Activated naive CD4-positive, alpha-beta T cell treated with anti-CD3 and anti-CD28 coated beads for 36 hours (primary cell): ENCODE measurements at regions of chr3 and their contacts with region 1.

Region 1: GRCh38 chr3:5026331-5027218 is 47.3 kb downstream of the BHLHE40 start:
- DNase-seq: peak; percentile 86
- H3K4me3 Mint-ChIP-seq: peak overlapping the region; percentile 74
- H3K27ac Mint-ChIP-seq: peak overlapping the region; percentile 80
- H3K4me1 Mint-ChIP-seq: peaks cover 38% of the 10 kb centered on the region
- H3K27me3 Mint-ChIP-seq: no peaks in the 10 kb centered on the region

Region 2: DNA sequence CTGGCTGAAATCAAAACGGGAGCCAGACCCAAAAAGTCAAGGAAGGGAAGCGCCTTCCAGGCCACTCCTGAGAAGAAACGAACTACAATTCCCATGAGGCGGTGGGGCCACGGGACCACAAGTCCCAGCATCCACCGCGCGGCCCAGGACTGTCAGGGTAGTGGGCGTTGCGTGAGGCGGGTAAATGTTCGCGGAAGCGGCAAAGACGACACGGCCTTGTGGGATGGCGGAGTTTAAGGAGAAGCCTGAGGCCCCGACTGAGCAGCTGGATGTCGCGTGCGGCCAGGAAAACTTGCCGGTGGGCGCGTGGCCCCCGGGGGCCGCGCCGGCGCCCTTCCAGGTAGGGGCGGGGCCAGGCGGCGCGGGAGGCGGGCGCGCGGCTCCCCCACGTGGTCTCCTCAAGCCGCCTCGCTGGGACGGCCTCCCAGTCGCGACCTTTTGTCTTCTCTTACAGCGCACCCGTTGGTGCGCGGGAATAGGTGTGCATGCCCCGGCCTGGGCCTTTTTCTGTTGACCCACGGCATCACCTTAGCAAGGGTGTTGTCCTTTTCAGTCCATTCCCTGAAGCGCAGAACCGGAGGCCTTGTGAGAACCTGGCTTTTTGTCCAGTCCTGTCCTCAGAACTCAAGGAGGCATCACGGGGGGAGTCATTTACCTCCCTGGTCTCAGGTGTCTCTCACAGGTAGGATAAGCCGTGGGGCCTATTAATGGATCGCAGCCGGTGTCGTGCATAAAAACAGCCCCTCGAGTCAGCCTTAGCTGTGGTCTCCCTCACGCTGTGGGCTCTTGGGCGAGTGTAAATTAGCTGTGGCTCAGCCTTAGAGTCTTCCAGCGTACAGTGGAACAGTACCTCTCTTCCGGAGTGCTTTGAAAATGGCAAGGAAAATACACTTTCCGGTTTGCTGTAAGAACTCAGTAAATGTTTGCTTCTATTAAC is 723.1 kb before region 1 on chr3 and contains the start of gene SETMAR:
- CTCF ChIA-PET with region 1: no interaction called
- intact Hi-C with region 1: loop called (anchors 5 kb)
- DNase-seq: peak; percentile 92
- H3K4me3 Mint-ChIP-seq: peak within 1 kb of the TSS; percentile 89
- H3K27ac Mint-ChIP-seq: peak within 1 kb of the TSS; percentile 98
- H3K4me1 Mint-ChIP-seq: peaks cover 27% of the 10 kb centered on the region
- H3K27me3 Mint-ChIP-seq: no peaks in the 10 kb centered on the region
- total RNA-seq, gene SETMAR: 11.6 to 12.6 TPM

Region 3: DNA sequence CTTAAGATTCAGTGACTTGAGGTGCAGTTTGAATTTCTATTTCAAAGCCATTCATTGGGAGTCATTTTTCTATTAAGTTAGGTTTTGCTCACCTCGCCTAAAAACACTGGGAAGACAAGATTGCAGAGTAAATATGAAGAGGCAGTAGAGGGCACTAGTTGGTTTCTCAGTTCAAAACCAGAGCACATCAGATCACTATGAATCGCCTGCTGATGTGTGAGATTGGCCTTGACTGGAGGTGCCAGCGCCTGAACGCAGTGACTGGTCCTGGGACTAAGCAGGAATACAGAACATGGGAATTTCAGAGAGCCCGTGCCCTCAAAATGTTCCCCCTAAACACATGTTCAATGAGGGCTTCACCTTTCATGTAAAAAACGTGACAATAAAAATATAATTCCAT is 304.5 kb before region 1 on chr3:
- CTCF ChIA-PET with region 1: interaction called, 13 read pairs
- intact Hi-C with region 1: loop called (anchors 1 kb)
- DNase-seq: peak; percentile 53
- H3K4me3 Mint-ChIP-seq: no peak overlapping the region
- H3K27ac Mint-ChIP-seq: peak overlapping the region; percentile 30
- H3K4me1 Mint-ChIP-seq: peaks cover 6% of the 10 kb centered on the region
- H3K27me3 Mint-ChIP-seq: no peaks in the 10 kb centered on the region

Region 4: DNA sequence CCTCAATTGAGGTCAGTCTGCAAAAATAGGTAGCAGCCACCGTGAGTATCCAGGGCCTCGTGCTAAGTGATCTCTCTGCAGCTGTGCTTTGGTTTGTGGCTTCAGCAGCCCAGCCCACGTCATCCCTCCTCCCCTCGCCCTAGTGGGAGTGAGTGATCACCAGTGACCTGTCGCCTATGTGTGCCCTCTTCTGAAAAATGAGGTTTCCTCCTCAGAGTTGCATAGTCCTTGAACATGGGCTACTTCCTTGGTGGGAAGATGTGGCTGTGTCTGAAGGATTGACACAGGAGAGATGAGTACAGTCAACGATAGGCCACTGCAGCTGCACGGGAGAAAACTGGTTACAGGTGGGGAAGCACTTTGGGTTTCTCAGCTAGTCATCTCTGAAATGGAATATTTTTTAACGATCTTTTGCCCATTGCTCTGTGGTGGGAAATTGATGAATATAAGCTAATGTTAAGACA is 192.1 kb before region 1 on chr3:
- CTCF ChIA-PET with region 1: interaction called, 5 read pairs
- intact Hi-C with region 1: loop called (anchors 1 kb)
- DNase-seq: peak; percentile 84
- H3K4me3 Mint-ChIP-seq: peak overlapping the region; percentile 13
- H3K27ac Mint-ChIP-seq: peak overlapping the region; percentile 93
- H3K4me1 Mint-ChIP-seq: peaks cover 85% of the 10 kb centered on the region
- H3K27me3 Mint-ChIP-seq: no peaks in the 10 kb centered on the region

Region 5: DNA sequence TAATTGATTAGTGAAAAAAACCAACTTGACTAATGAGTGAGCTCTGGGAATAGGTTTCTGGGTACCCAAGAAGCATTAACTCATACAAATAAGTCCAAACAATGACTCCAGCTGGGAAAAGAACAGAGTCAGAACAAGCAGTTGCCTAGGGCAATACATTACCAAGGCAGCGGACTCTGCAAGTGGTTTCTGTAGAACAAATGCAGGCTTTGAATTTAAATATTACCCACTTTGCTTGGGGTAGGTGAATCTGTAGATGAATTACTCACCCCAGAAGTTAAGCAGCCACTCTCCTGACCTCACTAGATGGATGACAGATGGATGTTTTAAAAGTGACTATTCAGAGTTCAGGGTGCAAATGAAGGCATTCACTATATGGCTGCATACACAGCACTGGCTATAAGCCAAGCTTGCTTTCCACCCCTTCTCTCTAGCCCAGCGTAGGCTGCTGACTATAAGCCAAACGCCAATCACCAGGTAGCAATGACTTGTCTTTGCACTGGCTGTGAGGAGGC is 120.4 kb before region 1 on chr3:
- CTCF ChIA-PET with region 1: interaction called, 7 read pairs
- intact Hi-C with region 1: loop called (anchors 1 kb)
- DNase-seq: peak; percentile 61
- H3K4me3 Mint-ChIP-seq: no peak overlapping the region
- H3K27ac Mint-ChIP-seq: no peak overlapping the region
- H3K4me1 Mint-ChIP-seq: peaks cover 72% of the 10 kb centered on the region
- H3K27me3 Mint-ChIP-seq: no peaks in the 10 kb centered on the region

Region 6: DNA sequence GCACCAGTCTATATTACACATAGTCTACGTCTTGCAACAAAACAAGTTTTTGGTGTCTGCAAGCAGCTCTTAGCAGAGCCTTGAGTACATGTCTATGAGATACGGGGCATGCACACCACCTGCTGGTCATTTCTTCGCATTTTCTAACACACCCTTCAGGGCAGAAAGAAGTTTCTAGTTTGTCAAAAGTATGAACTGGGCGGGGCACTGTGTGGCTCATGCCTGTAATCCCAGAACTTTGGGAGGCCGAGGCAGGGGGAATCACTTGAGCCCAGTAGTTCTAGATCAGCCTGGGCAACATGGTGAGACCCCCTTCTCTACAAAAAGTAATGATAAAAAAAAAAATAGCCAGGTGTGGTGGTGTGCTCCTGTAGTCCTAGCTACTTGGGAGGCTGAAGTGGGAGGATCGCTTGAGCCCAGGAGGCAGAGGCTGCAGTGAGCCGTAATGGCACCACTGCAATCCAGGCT is 31.3 kb after region 1 on chr3:
- CTCF ChIA-PET with region 1: interaction called, 6 read pairs
- intact Hi-C with region 1: loop called (anchors 2 kb)
- DNase-seq: peak; percentile 91
- H3K4me3 Mint-ChIP-seq: no peak overlapping the region
- H3K27ac Mint-ChIP-seq: no peak overlapping the region
- H3K4me1 Mint-ChIP-seq: peaks cover 5% of the 10 kb centered on the region
- H3K27me3 Mint-ChIP-seq: no peaks in the 10 kb centered on the region